Natural killer cell (primary cell): ENCODE measurements at regions of chr12 and their contacts with region 1.

Region 1: DNA sequence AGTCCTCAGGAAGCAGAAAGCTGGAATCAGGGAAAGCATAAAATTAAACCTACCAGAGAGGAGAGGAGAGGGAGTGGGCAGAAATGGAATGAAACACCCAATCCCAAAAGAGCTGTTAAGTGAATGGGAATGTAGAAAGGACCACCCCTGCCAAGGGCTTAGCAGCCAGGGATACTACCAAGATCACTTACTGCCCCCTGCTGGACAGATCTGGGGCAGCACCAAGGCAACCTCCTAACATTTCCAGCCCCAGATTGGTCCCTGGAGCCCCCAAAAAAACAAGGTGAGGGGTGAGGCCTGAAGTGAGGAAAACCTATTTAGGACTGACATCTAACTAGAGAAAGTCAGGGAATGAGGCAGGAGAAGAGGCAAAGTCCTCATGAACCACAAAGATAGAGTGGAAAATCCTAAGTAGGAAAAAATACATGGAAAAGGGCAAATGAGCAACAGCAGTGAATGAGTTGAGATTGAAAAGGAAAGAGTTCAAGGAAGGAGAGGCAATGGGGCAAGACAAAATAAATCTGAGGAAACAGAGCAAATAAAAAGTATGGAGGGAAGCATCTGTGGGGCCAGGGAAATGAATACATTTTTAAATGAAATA is 11.2 kb upstream of the FKBP11 start:
- DNase-seq: peak; percentile 86 to 92
- ATAC-seq: peak; percentile 32 to 58 (median 40)
- H3K4me3 ChIP-seq: no peak overlapping the region
- H3K4me3 Mint-ChIP-seq: peak overlapping the region; percentile 40
- H3K27ac ChIP-seq: no peak overlapping the region
- H3K27ac Mint-ChIP-seq: peak overlapping the region; percentile 95 to 98
- H3K4me1 ChIP-seq: peaks cover 51% of the 10 kb centered on the region
- H3K4me1 Mint-ChIP-seq: peaks cover 45% of the 10 kb centered on the region in 2 donors
- H3K27me3 ChIP-seq: no peaks in the 10 kb centered on the region
- H3K27me3 Mint-ChIP-seq: no peaks in the 10 kb centered on the region
- CTCF ChIP-seq: peak; percentile 93

Region 2: GRCh38 chr12:48851883-48852733 is 84.4 kb before region 1 on chr12 and contains the start of gene DDX23:
- intact Hi-C with region 1: loop called (anchors 1 kb)
- DNase-seq: peak; percentile 79 to 97
- ATAC-seq: peak; percentile 88 to 97 (median 93)
- H3K4me3 ChIP-seq: peak within 1 kb of the TSS; percentile 92
- H3K4me3 Mint-ChIP-seq: peak within 1 kb of the TSS; percentile 100
- H3K27ac ChIP-seq: peak within 1 kb of the TSS; percentile 92
- H3K27ac Mint-ChIP-seq: peak within 1 kb of the TSS; percentile 99 to 100
- H3K4me1 ChIP-seq: peaks cover 20% of the 10 kb centered on the region
- H3K4me1 Mint-ChIP-seq: peaks cover 42 to 46% of the 10 kb centered on the region in 2 donors
- H3K27me3 ChIP-seq: no peaks in the 10 kb centered on the region
- H3K27me3 Mint-ChIP-seq: no peaks in the 10 kb centered on the region
- CTCF ChIP-seq: no peak
- total RNA-seq, gene DDX23: 96.0 to 123 (median 104) TPM

Region 3: GRCh38 chr12:48903982-48904411 is 32.5 kb before region 1 on chr12:
- intact Hi-C with region 1: loop called (anchors 1 kb)
- DNase-seq: peak; percentile 74 to 93
- ATAC-seq: peak; percentile 95 to 100 (median 99)
- H3K4me3 ChIP-seq: peak overlapping the region; percentile 9
- H3K4me3 Mint-ChIP-seq: peak overlapping the region; percentile 56
- H3K27ac ChIP-seq: no peak overlapping the region
- H3K27ac Mint-ChIP-seq: peak overlapping the region in 1 of 2 donors; percentile 83
- H3K4me1 ChIP-seq: peaks cover 14% of the 10 kb centered on the region
- H3K4me1 Mint-ChIP-seq: peaks cover 6 to 11% of the 10 kb centered on the region in 2 donors
- H3K27me3 ChIP-seq: no peaks in the 10 kb centered on the region
- H3K27me3 Mint-ChIP-seq: no peaks in the 10 kb centered on the region
- CTCF ChIP-seq: peak; percentile 84

Region 4: DNA sequence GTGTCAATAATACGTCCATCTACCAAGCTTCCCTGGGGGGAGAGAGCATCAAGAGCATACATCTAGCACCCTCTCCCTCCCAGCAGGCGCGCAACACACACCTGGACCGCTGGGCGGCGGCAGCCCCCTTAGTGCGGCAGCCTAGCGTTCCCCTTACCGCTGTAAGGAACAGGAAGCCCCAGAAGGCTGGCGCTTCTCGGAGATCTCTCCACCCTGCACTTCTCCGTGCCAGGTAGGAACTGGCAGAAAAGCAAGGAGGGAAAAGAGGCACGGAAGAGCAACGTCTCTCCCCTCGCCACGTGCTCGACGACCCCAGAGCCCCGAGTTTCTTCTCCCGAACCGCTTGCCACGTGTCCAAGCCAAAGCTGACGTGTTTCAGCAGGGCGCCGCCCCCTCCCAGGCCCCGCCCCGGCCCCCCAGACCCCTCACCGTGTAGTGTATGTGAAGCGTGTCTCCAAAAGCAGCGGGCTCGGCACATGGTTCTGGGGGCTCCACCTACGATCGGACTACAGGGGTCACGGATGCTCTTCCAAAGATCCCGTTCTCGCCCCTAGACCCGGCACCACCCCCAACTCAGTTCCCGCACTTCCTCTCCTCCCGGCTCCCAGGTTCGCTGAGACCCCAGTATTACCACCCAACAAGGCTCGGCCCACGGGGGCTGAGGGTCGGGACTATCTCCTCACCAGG is 11.7 kb before region 1 on chr12:
- intact Hi-C with region 1: loop called (anchors 1 kb)
- DNase-seq: peak; percentile 64 to 89
- ATAC-seq: peak; percentile 59 to 77 (median 67)
- H3K4me3 ChIP-seq: peak overlapping the region; percentile 92
- H3K4me3 Mint-ChIP-seq: peak overlapping the region; percentile 96
- H3K27ac ChIP-seq: peak overlapping the region; percentile 93
- H3K27ac Mint-ChIP-seq: peak overlapping the region; percentile 87 to 94
- H3K4me1 ChIP-seq: peaks cover 28% of the 10 kb centered on the region
- H3K4me1 Mint-ChIP-seq: peaks cover 57 to 60% of the 10 kb centered on the region in 2 donors
- H3K27me3 ChIP-seq: no peaks in the 10 kb centered on the region
- H3K27me3 Mint-ChIP-seq: no peaks in the 10 kb centered on the region
- CTCF ChIP-seq: peak; percentile 69

Region 5: GRCh38 chr12:49018261-49019119 is 82.0 kb after region 1 on chr12 and contains the start of gene PRKAG1:
- intact Hi-C with region 1: loop called (anchors 1 kb)
- DNase-seq: peak; percentile 97 to 98
- ATAC-seq: peak; percentile 81 to 94 (median 86)
- H3K4me3 ChIP-seq: peak within 1 kb of the TSS; percentile 71
- H3K4me3 Mint-ChIP-seq: peak within 1 kb of the TSS; percentile 92
- H3K27ac ChIP-seq: peak within 1 kb of the TSS; percentile 92
- H3K27ac Mint-ChIP-seq: peak within 1 kb of the TSS; percentile 97 to 98
- H3K4me1 ChIP-seq: peaks cover 24% of the 10 kb centered on the region
- H3K4me1 Mint-ChIP-seq: peaks cover 23 to 55% of the 10 kb centered on the region in 2 donors
- H3K27me3 ChIP-seq: no peaks in the 10 kb centered on the region
- H3K27me3 Mint-ChIP-seq: no peaks in the 10 kb centered on the region
- CTCF ChIP-seq: peak; percentile 56
- total RNA-seq, gene PRKAG1: 76.4 to 100 (median 81.1) TPM

Region 6: GRCh38 chr12:49413796-49414195 is 477.3 kb after region 1 on chr12:
- intact Hi-C with region 1: no loop called
- DNase-seq: no peak
- ATAC-seq: no peak
- H3K4me3 ChIP-seq: no peak overlapping the region
- H3K4me3 Mint-ChIP-seq: no peak overlapping the region
- H3K27ac ChIP-seq: no peak overlapping the region
- H3K27ac Mint-ChIP-seq: no peak overlapping the region
- H3K4me1 ChIP-seq: no peaks in the 10 kb centered on the region
- H3K4me1 Mint-ChIP-seq: peaks cover 7% of the 10 kb centered on the region in 2 donors
- H3K27me3 ChIP-seq: no peaks in the 10 kb centered on the region
- H3K27me3 Mint-ChIP-seq: no peaks in the 10 kb centered on the region
- CTCF ChIP-seq: no peak